Mammary epithelial cell (primary cell): ENCODE measurements at regions of chr12 and their contacts with region 1.

Region 1: DNA sequence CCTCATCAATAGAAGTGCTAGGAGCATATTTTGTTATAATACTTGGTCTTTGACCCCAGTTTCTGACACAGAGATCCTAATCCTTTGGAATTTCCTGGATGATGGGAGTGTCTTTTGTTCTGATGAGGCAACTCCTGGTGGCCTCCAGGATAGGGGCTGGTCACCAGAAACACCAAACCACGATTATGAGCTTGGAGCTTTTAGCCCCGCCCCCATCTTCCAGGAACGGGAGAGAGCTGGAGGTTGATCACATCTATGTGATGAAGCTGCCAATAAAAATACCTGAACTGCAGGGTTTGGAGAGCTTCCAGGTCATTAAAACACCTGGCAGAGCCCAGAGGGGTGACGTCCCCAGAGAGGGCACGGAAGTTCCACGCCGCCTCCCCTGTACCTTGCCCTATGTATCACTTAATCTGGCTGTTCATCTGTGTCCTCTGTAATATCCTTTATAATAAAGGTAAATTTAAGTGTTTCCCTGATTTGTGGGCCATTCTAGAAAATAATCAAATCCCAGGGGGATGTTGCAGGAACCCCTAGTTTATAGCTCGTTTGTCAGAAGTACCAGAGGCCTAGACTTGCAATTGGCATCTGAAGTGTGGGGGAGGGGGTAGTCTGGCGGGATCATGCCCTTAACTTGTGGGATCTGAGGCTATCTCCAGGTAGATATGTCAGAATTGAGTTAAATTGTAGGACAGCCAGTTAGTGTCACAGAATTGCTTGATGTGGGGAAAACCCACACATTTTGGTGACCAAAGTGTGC is 21.2 kb downstream of the APPL2 start:
- DNase-seq: peak; percentile 70
- H3K4me3 ChIP-seq: no peak overlapping the region
- H3K27ac ChIP-seq: peak overlapping the region; percentile 77
- H3K4me1 ChIP-seq: peaks cover 22% of the 10 kb centered on the region
- H3K27me3 ChIP-seq: no peaks in the 10 kb centered on the region
- CTCF ChIP-seq: no peak

Region 2: GRCh38 chr12:105164068-105164467 is 50.7 kb before region 1 on chr12:
- CTCF ChIA-PET with region 1: no interaction called
- dilution Hi-C with region 1: no loop called
- in situ Hi-C with region 1: no loop called
- intact Hi-C with region 1: loop called (anchors 1 kb)
- DNase-seq: peak; percentile 3
- H3K4me3 ChIP-seq: no peak overlapping the region
- H3K27ac ChIP-seq: no peak overlapping the region
- H3K4me1 ChIP-seq: no peaks in the 10 kb centered on the region
- H3K27me3 ChIP-seq: no peaks in the 10 kb centered on the region
- CTCF ChIP-seq: no peak

Region 3: GRCh38 chr12:105611340-105611739 is 396.5 kb after region 1 on chr12:
- CTCF ChIA-PET with region 1: no interaction called
- dilution Hi-C with region 1: no loop called
- in situ Hi-C with region 1: no loop called
- intact Hi-C with region 1: no loop called
- DNase-seq: no peak
- H3K4me3 ChIP-seq: no peak overlapping the region
- H3K27ac ChIP-seq: no peak overlapping the region
- H3K4me1 ChIP-seq: peaks cover 5% of the 10 kb centered on the region
- H3K27me3 ChIP-seq: no peaks in the 10 kb centered on the region
- CTCF ChIP-seq: no peak